ENCODE measurements at regions of chrX and their contacts with region 1.

Region 1: GRCh38 chrX:83469551-83469950 is 38.5 kb upstream of the POU3F4 start:
- DNase-seq: no peak
- H3K4me3 Mint-ChIP-seq: no peak overlapping the region
- H3K27ac Mint-ChIP-seq: no peak overlapping the region
- H3K4me1 Mint-ChIP-seq: no peaks in the 10 kb centered on the region
- H3K27me3 Mint-ChIP-seq: no peaks in the 10 kb centered on the region

Region 2: GRCh38 chrX:82961129-82961528 is 508.4 kb before region 1 on chrX:
- intact Hi-C with region 1: no loop called
- DNase-seq: no peak
- H3K4me3 Mint-ChIP-seq: no peak overlapping the region
- H3K27ac Mint-ChIP-seq: no peak overlapping the region
- H3K4me1 Mint-ChIP-seq: no peaks in the 10 kb centered on the region
- H3K27me3 Mint-ChIP-seq: no peaks in the 10 kb centered on the region

Region 3: GRCh38 chrX:83630662-83631061 is 161.1 kb after region 1 on chrX:
- intact Hi-C with region 1: loop called (anchors 1 kb)
- DNase-seq: no peak
- H3K4me3 Mint-ChIP-seq: no peak overlapping the region
- H3K27ac Mint-ChIP-seq: no peak overlapping the region
- H3K4me1 Mint-ChIP-seq: peaks cover 9% of the 10 kb centered on the region
- H3K27me3 Mint-ChIP-seq: no peaks in the 10 kb centered on the region

Measured in activated T-helper 1 cell treated with anti-CD3 and anti-CD28 coated beads, Interleukin-12 subunit alpha, Interleukin-12 subunit beta, Interleukin-2, Interleukin-4 antibody, amounts not matched to agents 30 ng/mL and 10 ng/mL and 1 ng/mL, durations not matched to agents 14 hours and 24 hours and 36 hours (primary cell).